Transverse colon (tissue), 4 donors: ENCODE measurements at regions of chr17 and their contacts with region 1.

Region 1: GRCh38 chr17:79045842-79046196 is 21.9 kb downstream of the C1QTNF1 start:
- DNase-seq: peak; percentile 74
- H3K4me3 ChIP-seq: no peak overlapping the region
- H3K27ac ChIP-seq: no peak overlapping the region
- H3K4me1 ChIP-seq: peaks cover 0 to 3% (median 0%) of the 10 kb centered on the region in 4 donors
- H3K27me3 ChIP-seq: no peaks in the 10 kb centered on the region
- CTCF ChIP-seq: peak; percentile 85 to 95 (median 90)
- EP300 ChIP-seq: no peak
- POLR2A ChIP-seq: no peak

Region 2: DNA sequence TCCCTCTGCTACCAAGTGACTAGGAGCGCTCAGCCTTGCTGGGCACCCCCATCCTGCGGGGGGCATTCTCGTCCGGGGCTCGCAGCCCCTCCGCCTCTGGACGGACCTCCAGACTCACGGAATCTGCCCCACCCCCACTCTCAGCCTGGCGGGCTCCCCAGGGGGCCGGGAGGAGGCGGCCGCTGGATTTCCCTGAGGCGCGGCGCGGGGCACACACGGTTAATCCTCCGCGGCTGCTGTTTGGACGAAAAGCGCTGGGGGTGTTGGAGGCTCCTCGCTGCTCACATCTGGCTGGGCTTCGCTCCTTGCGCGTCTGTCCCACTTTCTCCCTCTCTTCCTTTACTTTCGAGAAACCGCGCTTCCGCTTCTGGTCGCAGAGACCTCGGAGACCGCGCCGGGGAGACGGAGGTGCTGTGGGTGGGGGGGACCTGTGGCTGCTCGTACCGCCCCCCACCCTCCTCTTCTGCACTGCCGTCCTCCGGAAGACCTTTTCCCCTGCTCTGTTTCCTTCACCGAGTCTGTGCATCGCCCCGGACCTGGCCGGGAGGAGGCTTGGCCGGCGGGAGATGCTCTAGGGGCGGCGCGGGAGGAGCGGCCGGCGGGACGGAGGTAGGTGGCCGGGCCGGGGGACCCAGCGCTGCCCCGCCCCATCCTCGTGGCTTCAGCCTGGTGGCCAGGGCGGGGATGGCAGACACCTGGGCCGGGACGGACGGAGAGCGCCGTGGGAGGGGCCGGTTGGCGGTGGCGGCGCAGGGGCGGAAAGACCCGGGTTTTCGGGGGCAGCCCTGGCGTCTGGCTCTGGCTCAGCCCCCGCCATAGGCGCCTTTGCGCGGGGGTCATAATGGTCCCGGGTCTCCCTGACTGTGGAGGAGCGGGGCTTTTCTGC is 21.7 kb before region 1 on chr17 and contains the start of gene C1QTNF1:
- in situ Hi-C with region 1: no loop called
- intact Hi-C with region 1: loop called (anchors 2 kb)
- DNase-seq: peak; percentile 70
- H3K4me3 ChIP-seq: peak within 1 kb of the TSS; percentile 44 to 80 (median 64)
- H3K27ac ChIP-seq: peak within 1 kb of the TSS; percentile 66 to 77 (median 68)
- H3K4me1 ChIP-seq: peaks cover 42 to 78% (median 66%) of the 10 kb centered on the region in 4 donors
- H3K27me3 ChIP-seq: no peaks in the 10 kb centered on the region
- CTCF ChIP-seq: peak; percentile 62 to 87 (median 65)
- EP300 ChIP-seq: no peak
- POLR2A ChIP-seq: peak; percentile 30
- total RNA-seq, gene C1QTNF1: 5.4 to 35.5 (median 12.0) TPM

Region 3: DNA sequence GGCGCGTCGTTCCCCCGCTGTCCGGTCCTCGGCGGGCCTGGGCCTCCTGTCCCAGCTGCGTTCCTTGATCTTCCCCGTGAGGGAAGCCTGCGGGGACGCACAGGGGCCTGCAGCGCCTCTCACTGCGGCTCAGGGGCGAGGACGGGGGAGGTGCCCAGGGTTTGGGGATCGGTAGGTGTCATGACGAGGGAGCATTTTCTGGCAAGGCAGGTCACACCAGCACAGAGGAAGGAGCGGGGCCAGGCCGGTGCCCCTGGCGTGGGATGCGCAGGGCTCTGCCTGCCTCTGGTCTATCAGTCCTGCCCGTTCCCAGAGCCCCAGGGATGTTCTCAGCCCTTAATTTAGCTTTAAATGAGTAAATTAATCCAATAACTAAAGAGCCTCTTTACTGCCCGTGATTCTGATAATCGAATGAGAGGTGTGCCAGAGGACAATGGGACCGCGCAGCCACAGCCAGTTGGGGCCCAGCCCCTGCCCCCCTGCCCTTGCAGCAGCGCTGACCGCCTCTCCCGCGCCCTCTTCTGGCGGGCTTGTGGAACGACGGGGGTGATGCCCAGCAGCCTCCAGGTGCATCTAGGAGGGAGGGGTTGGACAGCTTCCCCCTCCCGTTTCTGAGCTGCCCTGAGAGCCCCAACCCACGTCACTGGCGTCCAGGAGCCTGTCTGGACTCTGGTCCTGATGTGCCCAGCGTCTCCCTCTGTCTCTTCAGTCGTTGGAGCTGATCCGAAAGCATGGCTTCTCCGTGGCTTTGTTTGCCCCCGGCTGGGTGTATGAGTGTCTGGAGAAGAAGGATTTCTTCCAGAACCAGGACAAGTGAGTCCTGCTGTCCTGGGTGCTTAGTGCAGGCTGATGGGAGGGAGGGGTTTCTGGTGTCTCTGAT is 36.7 kb after region 1 on chr17:
- in situ Hi-C with region 1: no loop called
- intact Hi-C with region 1: loop called (anchors 1 kb)
- DNase-seq: peak; percentile 55
- H3K4me3 ChIP-seq: no peak overlapping the region
- H3K27ac ChIP-seq: no peak overlapping the region
- H3K4me1 ChIP-seq: peaks cover 0 to 13% (median 5%) of the 10 kb centered on the region in 4 donors
- H3K27me3 ChIP-seq: no peaks in the 10 kb centered on the region
- CTCF ChIP-seq: peak; percentile 79 to 88 (median 83)
- EP300 ChIP-seq: no peak
- POLR2A ChIP-seq: no peak